ENCODE measurements at regions of chr5 and their contacts with region 1.

Region 1: DNA sequence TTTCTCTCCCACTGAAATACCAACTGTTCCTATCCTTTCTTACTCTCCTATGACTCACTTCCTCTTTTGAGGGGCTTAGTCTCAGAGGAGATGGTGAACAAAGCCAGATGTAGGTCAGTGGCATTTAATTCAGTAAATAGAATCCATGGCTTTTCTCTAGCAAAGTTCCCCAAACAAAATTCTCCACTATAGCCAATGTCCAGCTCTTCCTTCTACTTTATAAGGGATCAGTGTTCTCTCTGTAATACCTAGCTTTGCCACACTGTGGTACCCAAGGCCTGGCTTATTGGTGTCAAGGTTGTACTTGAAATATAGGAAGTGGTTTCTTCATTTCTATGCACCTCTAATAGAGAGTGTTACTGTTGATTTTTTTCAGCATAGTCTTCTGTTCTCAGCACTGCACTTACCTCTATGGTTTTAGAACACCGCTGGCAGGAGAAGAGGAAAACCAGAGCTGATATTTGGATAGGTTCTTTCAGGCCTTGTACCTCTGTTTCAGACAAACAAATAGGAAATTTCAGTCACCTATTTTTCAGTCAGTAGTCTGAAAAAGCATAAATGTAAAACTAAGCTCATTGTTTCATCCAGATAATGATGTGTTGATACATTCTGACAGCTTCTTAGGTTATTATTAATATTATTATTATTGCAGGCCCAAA is 40.6 kb upstream of the ITGA2 start:
- DNase-seq: peak; percentile 55
- H3K4me3 ChIP-seq: no peak overlapping the region
- H3K27me3 ChIP-seq: no peaks in the 10 kb centered on the region
- CTCF ChIP-seq: peak; percentile 74

Region 2: DNA sequence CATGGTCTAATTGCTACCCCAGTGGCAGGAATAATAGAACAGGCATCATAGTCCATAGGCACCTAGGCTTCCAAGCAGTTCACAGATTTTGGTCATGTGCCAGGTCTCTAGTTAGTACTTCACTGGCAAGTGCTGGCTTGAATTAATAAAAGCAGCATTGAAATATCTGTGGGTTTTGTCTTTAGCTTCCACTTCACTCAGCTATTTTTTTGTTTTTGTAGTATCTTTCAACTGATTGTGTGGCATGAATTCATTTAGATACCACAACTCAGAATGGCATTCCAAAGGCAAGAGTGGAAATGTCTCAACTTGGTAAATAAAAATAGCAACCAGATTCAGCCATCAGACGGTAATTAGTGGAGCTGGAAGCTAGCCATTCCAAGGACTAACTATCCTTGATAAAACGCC is 12.7 kb after region 1 on chr5:
- CTCF ChIA-PET with region 1: interaction called, 13 read pairs
- POLR2A ChIA-PET with region 1: no interaction called
- DNase-seq: peak; percentile 30
- H3K4me3 ChIP-seq: no peak overlapping the region
- H3K27me3 ChIP-seq: no peaks in the 10 kb centered on the region
- CTCF ChIP-seq: no peak

Region 3: GRCh38 chr5:53089345-53089991 is 140.9 kb after region 1 on chr5:
- CTCF ChIA-PET with region 1: interaction called, 107 read pairs
- POLR2A ChIA-PET with region 1: no interaction called
- DNase-seq: no peak
- H3K4me3 ChIP-seq: no peak overlapping the region
- H3K27me3 ChIP-seq: no peaks in the 10 kb centered on the region
- CTCF ChIP-seq: no peak

Region 4: DNA sequence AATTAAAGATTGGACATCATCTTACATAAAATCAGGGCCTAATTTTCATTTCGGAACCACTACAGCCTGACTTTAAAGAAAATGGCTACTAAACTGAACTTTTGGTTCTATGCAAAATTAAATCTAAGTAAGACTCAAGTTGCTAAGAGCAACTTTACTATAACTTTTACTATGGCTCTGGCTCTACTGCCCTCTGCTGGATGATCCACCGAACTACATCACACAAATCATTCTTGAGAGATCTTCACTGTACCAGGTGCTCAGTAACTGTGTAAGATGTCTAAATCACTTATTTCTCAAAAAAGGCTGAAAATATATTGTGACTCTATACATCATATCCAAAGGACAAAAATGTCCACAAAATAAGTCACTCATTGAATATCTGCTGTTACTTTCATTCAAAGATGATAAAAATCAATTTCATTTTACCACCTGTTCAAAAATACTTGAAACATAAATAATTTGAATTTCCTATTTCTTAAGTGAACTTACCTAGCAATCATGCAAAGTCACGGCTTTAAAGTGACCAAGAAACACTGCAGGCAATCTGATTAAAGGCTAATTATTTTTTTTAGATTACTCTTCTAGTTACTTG is 147.5 kb after region 1 on chr5:
- CTCF ChIA-PET with region 1: interaction called, 107 read pairs
- POLR2A ChIA-PET with region 1: no interaction called
- DNase-seq: no peak
- H3K4me3 ChIP-seq: no peak overlapping the region
- H3K27me3 ChIP-seq: no peaks in the 10 kb centered on the region
- CTCF ChIP-seq: peak; percentile 79